Psoas muscle (tissue), 8 donors: ENCODE measurements at regions of chr9 and their contacts with region 1.

Region 1: DNA sequence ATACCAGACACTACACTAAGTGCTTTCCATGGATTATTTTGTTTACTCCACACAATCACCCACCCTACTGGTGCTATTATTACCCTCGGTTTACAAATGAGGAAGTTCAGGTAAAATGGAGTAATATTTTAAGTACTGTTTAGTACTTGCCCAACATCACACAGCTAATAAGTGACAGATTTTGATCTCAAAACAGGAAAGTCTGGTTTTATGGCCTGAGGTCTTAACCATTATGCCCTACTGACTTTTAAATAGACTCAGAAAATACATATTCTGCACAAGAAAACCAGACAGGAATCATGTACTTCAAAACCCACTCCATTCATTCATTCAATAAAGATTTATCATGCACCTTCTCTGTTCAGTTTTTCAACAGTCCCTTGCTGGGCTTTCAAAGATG is 431.0 kb upstream of the TLE4 start:
- DNase-seq: no peak
- ATAC-seq: no peak
- H3K4me3 ChIP-seq: no peak overlapping the region
- H3K27ac ChIP-seq: no peak overlapping the region
- H3K4me1 ChIP-seq: no peaks in the 10 kb centered on the region
- H3K27me3 ChIP-seq: no peaks in the 10 kb centered on the region
- CTCF ChIP-seq: no peak

Region 2: DNA sequence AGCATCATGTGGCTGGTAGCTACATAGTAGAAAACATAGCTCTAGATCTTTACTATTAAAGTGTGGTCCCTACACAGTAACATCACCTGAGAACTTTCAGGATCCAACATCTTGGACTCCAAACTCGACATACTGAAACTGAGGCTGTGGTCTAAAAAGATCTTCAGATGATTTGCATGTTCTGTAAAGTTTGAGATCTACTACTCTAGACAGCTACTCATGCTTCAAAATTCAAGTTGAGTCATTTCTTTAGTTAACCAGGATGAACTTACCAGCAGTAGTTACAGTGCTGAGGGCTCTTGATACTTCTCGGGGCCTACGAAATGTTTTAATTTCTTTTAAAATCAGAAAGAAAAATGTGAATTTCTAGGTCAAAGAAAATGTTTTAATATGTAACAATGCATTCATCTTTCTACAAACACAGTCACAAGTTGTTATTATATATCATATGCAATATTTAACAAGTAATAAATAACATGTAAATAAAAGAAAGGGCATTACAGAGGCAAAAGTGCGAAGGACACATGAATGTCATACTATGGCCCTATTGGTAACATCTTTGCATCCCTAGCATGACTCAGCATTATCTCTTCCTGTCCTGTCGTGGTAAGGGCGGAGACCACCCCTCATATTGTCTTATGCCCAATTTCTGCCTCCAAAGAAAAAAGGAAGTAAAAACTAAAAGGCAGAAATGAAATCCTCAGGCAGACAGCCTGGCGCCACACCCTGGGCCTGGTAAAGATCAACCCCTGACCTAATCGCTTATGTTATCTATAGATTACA is 132.9 kb before region 1 on chr9:
- intact Hi-C with region 1: no loop called
- DNase-seq: no peak
- ATAC-seq: no peak
- H3K4me3 ChIP-seq: no peak overlapping the region
- H3K27ac ChIP-seq: no peak overlapping the region
- H3K4me1 ChIP-seq: no peaks in the 10 kb centered on the region
- H3K27me3 ChIP-seq: no peaks in the 10 kb centered on the region
- CTCF ChIP-seq: no peak

Region 3: DNA sequence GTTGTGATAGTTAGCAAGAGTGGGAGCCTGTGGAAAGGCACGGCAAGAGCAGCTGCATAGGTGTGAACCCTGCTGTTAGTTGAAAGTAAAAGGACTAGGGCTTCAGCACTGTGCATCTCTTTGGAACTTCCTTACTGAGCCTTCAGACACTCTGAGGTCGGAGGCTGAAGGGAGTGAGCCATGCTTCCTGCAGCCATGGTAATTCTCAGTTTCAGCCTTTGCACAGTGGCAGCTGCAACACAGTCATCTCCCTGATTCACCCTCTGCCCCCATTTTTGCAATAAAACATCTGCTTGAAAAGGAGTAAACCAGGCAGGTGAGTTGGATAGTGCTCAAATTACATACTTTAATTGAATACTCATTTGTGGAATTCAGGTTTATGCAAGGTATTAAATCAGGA is 424.5 kb after region 1 on chr9:
- intact Hi-C with region 1: loop called in 1 of 2 experiments (anchors 10 kb)
- DNase-seq: no peak
- ATAC-seq: no peak
- H3K4me3 ChIP-seq: no peak overlapping the region
- H3K27ac ChIP-seq: no peak overlapping the region
- H3K4me1 ChIP-seq: no peaks in the 10 kb centered on the region
- H3K27me3 ChIP-seq: no peaks in the 10 kb centered on the region
- CTCF ChIP-seq: no peak